MCF 10A (cell line): ENCODE measurements at regions of chr17 and their contacts with region 1.

Region 1: GRCh38 chr17:31216053-31216751 is 80.8 kb downstream of the OMG start:
- DNase-seq: peak; percentile 52
- H3K4me3 Mint-ChIP-seq: no peak overlapping the region
- H3K27ac Mint-ChIP-seq: no peak overlapping the region
- H3K4me1 Mint-ChIP-seq: no peaks in the 10 kb centered on the region
- H3K27me3 Mint-ChIP-seq: no peaks in the 10 kb centered on the region
- CTCF ChIP-seq: peak; percentile 32

Region 2: GRCh38 chr17:30906101-30906911 is 309.9 kb before region 1 on chr17 and contains the start of gene TEFM:
- CTCF ChIA-PET with region 1: interaction called, 3 read pairs
- POLR2A ChIA-PET with region 1: no interaction called
- intact Hi-C with region 1: loop called (anchors 2 kb)
- DNase-seq: peak; percentile 90
- H3K4me3 Mint-ChIP-seq: peak within 1 kb of the TSS; percentile 95
- H3K27ac Mint-ChIP-seq: peak within 1 kb of the TSS; percentile 98
- H3K4me1 Mint-ChIP-seq: peaks cover 19% of the 10 kb centered on the region
- H3K27me3 Mint-ChIP-seq: no peaks in the 10 kb centered on the region
- CTCF ChIP-seq: no peak
- total RNA-seq, gene TEFM: 10.7 and 13.8 TPM in 2 replicates

Region 3: DNA sequence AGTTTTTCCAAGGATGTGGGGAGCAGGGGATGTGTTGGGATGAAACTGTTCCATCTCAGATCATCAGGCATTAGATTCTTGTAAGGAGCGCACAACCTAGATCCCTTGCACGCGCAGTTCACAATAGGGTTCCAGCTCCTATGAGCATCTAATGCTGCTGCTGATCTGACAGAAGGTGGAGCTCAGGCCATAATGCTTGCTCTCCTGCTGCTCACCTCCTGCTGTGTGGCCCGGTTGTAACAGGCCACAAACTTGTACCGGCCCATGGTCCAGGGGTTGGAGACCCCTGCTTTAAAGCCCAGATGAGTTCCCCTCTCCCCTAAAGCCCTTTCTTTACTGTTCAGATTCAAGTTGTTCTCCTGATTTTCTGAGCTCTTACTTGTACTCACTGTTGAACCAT is 200.6 kb before region 1 on chr17:
- CTCF ChIA-PET with region 1: interaction called, 39 read pairs
- POLR2A ChIA-PET with region 1: interaction called, 12 read pairs
- intact Hi-C with region 1: loop called (anchors 1 kb)
- DNase-seq: no peak
- H3K4me3 Mint-ChIP-seq: no peak overlapping the region
- H3K27ac Mint-ChIP-seq: no peak overlapping the region
- H3K4me1 Mint-ChIP-seq: peaks cover 4% of the 10 kb centered on the region
- H3K27me3 Mint-ChIP-seq: no peaks in the 10 kb centered on the region
- CTCF ChIP-seq: no peak

Region 4: DNA sequence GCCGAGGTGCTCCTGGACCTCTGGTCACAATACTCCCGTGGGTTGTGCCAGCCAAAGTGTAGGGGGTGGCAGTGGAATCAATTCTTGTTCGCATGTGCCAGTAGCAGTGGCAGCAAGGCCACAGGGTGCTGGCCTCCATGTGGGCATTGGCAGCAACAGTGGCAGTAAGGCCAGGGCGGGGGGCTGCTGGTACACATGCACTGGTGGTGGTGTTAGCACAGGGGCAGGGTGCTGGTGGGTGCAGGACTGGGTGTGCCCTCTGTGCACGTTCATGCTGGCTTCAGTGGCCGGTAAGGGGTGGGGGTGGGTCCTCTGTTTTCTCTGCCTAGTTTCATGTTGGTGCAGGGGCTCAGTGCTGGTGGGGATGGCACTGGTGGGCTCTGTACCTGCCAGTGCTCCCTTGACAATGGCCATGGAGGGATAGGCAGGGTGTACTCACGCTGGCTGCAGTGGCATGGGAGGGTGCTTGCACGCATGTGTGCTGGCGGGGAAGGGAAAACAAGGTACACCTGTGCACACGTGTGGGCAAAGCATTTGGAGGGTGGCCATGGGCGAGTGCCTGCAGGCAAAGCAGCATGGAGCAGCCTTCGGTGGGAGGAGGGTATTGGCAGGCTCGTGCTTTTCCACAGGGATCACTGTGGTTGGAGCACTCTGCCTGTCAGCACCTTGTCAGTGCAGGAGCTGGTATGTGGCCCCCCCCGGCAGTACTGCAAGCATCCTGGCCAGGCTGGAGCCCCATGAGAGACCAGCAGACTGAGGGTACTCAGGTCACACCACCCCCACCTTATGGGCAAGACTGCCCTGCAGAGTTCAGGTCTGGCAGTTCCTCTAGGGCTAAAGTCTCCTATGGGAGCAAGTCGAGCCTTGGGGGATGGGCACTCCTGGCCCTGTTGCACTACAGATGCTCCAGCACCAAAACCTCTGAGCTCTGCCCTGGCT is 85.6 kb before region 1 on chr17:
- CTCF ChIA-PET with region 1: no interaction called
- POLR2A ChIA-PET with region 1: no interaction called
- intact Hi-C with region 1: no loop called
- DNase-seq: no peak
- H3K4me3 Mint-ChIP-seq: no peak overlapping the region
- H3K27ac Mint-ChIP-seq: peak overlapping the region; percentile 19
- H3K4me1 Mint-ChIP-seq: no peaks in the 10 kb centered on the region
- H3K27me3 Mint-ChIP-seq: no peaks in the 10 kb centered on the region
- CTCF ChIP-seq: no peak

Region 5: DNA sequence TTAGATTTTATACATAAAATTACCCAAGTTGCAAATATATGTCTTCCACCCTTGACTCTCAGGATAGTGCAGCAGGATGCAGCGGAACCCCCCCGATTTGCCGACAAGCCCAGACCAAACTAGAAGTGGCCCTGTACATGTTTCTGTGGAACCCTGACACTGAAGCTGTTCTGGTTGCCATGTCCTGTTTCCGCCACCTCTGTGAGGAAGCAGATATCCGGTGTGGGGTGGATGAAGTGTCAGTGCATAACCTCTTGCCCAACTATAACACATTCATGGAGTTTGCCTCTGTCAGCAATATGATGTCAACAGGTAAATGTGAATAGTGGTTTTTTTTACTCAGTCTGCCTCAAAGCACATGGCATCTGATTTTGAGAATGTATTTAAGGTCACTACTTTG is 10.2 kb after region 1 on chr17:
- CTCF ChIA-PET with region 1: interaction called, 16 read pairs
- POLR2A ChIA-PET with region 1: interaction called, 3 read pairs
- intact Hi-C with region 1: no loop called
- DNase-seq: no peak
- H3K4me3 Mint-ChIP-seq: no peak overlapping the region
- H3K27ac Mint-ChIP-seq: no peak overlapping the region
- H3K4me1 Mint-ChIP-seq: no peaks in the 10 kb centered on the region
- H3K27me3 Mint-ChIP-seq: no peaks in the 10 kb centered on the region
- CTCF ChIP-seq: no peak

Region 6: DNA sequence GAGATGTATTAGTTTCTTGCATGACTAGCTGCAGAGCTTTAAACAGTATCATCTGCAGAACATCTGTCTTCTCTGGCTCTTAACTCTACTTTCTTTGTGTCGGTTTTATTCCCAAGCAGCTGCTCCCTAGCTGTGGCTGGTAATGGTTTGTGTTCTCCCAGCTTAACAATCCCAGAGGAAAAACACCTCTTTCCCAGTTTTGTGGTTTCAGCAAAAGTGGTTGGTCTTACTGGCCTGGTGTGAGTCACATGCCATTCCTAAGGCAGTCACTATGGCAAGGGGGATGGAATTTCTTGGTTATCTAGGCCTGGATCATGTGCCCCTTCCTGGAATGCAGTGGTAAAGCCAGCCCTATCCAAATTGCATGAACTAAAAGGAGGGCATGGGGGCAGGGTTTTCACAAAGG is 53.4 kb after region 1 on chr17:
- CTCF ChIA-PET with region 1: no interaction called
- POLR2A ChIA-PET with region 1: no interaction called
- intact Hi-C with region 1: no loop called
- DNase-seq: peak; percentile 89
- H3K4me3 Mint-ChIP-seq: peak overlapping the region; percentile 38
- H3K27ac Mint-ChIP-seq: peak overlapping the region; percentile 52
- H3K4me1 Mint-ChIP-seq: peaks cover 39% of the 10 kb centered on the region
- H3K27me3 Mint-ChIP-seq: no peaks in the 10 kb centered on the region
- CTCF ChIP-seq: no peak